Activated naive CD4-positive, alpha-beta T cell treated with anti-CD3 and anti-CD28 coated beads for 36 hours (primary cell): ENCODE measurements at regions of chr7 and their contacts with region 1.

Region 1: GRCh38 chr7:51162724-51163329 is 153.8 kb downstream of the COBL start:
- DNase-seq: peak; percentile 92
- H3K4me3 Mint-ChIP-seq: no peak overlapping the region
- H3K27ac Mint-ChIP-seq: no peak overlapping the region
- H3K4me1 Mint-ChIP-seq: peaks cover 9% of the 10 kb centered on the region
- H3K27me3 Mint-ChIP-seq: peaks cover 12% of the 10 kb centered on the region

Region 2: GRCh38 chr7:50610521-50611277 is 552.1 kb before region 1 on chr7:
- CTCF ChIA-PET with region 1: interaction called, 6 read pairs
- intact Hi-C with region 1: loop called (anchors 2 kb)
- DNase-seq: peak; percentile 80
- H3K4me3 Mint-ChIP-seq: no peak overlapping the region
- H3K27ac Mint-ChIP-seq: no peak overlapping the region
- H3K4me1 Mint-ChIP-seq: peaks cover 26% of the 10 kb centered on the region
- H3K27me3 Mint-ChIP-seq: no peaks in the 10 kb centered on the region

Region 3: GRCh38 chr7:50696810-50697582 is 465.8 kb before region 1 on chr7:
- CTCF ChIA-PET with region 1: interaction called, 3 read pairs
- intact Hi-C with region 1: loop called (anchors 1 kb)
- DNase-seq: peak; percentile 15
- H3K4me3 Mint-ChIP-seq: no peak overlapping the region
- H3K27ac Mint-ChIP-seq: no peak overlapping the region
- H3K4me1 Mint-ChIP-seq: peaks cover 19% of the 10 kb centered on the region
- H3K27me3 Mint-ChIP-seq: no peaks in the 10 kb centered on the region

Region 4: DNA sequence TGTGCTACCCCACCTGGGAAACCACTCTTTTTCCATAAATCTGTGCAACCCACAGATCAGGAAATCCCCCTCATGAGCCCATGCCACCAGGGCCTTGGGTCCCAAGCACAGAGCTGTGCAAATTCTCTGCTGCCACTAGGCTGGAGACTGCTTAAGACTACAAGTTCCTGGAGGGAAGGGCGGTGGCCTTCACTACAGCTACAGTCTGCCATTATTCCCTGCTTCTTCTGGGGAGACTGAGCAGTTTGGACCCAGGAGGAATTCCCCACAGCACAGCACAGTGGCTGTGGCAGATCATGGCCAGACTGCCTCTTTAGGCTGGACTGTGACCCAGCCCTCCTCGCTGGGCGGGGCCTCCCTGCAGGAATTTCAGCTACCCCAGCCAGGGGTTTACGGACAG is 290.4 kb before region 1 on chr7:
- CTCF ChIA-PET with region 1: no interaction called
- intact Hi-C with region 1: no loop called
- DNase-seq: no peak
- H3K4me3 Mint-ChIP-seq: no peak overlapping the region
- H3K27ac Mint-ChIP-seq: no peak overlapping the region
- H3K4me1 Mint-ChIP-seq: no peaks in the 10 kb centered on the region
- H3K27me3 Mint-ChIP-seq: peaks cover 19% of the 10 kb centered on the region

Region 5: GRCh38 chr7:51060536-51060935 is 102.3 kb before region 1 on chr7:
- CTCF ChIA-PET with region 1: interaction called, 6 read pairs
- intact Hi-C with region 1: loop called (anchors 2 kb)
- DNase-seq: no peak
- H3K4me3 Mint-ChIP-seq: no peak overlapping the region
- H3K27ac Mint-ChIP-seq: no peak overlapping the region
- H3K4me1 Mint-ChIP-seq: no peaks in the 10 kb centered on the region
- H3K27me3 Mint-ChIP-seq: no peaks in the 10 kb centered on the region

Region 6: GRCh38 chr7:51175316-51175991 is 12.6 kb after region 1 on chr7:
- CTCF ChIA-PET with region 1: interaction called, 11 read pairs
- intact Hi-C with region 1: no loop called
- DNase-seq: no peak
- H3K4me3 Mint-ChIP-seq: no peak overlapping the region
- H3K27ac Mint-ChIP-seq: no peak overlapping the region
- H3K4me1 Mint-ChIP-seq: no peaks in the 10 kb centered on the region
- H3K27me3 Mint-ChIP-seq: peaks cover 1% of the 10 kb centered on the region

Region 7: DNA sequence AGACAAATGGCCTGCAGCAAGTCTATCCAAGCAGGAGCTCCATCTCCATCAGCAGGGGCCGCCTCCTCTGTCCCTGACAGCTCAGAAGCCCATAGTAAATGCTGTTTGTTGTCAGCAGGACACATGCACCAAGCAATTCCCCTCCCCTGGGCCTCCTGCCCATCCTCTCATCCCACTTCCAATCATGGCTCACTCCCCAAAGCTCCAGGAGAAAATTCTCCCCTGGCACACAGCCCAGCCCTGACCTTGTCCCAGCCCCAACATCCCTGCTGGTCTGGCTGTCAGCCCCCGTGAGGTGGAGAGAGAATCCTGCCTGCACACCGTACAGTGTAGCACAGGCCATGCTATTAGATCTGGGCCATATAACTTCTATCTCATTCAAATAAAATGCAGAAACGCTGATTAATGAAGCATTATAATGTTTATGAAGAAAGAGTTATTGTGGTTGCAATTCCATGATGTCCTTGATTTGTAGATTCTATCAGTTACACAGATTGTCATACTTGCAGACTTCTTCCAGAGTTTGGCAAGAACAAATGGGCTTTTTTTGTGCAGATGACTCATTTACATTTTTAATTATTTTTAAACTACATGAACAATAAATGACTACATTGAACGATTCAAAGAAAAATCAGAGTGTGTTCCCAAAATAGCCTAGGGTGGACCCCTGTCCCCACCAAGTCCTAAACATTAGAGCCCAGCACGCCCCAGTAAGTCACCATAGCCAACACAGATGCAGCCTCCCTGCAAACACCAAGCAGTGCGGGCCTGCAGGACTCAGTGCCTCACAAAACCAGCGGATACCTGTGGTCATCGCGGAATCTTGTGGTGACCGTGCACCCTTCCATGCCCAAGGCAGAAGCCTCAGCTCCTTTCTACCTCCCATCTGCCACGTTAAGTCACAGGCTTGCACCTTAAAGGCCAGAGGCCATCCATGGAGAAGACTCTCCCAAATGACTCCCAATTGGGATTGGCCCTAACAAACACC is 83.7 kb after region 1 on chr7:
- CTCF ChIA-PET with region 1: no interaction called
- intact Hi-C with region 1: no loop called
- DNase-seq: no peak
- H3K4me3 Mint-ChIP-seq: no peak overlapping the region
- H3K27ac Mint-ChIP-seq: no peak overlapping the region
- H3K4me1 Mint-ChIP-seq: no peaks in the 10 kb centered on the region
- H3K27me3 Mint-ChIP-seq: peaks cover 6% of the 10 kb centered on the region

Region 8: GRCh38 chr7:51366930-51367613 is 204.2 kb after region 1 on chr7:
- CTCF ChIA-PET with region 1: interaction called, 31 read pairs
- intact Hi-C with region 1: loop called (anchors 1 kb)
- DNase-seq: peak; percentile 25
- H3K4me3 Mint-ChIP-seq: no peak overlapping the region
- H3K27ac Mint-ChIP-seq: no peak overlapping the region
- H3K4me1 Mint-ChIP-seq: no peaks in the 10 kb centered on the region
- H3K27me3 Mint-ChIP-seq: no peaks in the 10 kb centered on the region

Region 9: GRCh38 chr7:51471981-51472296 is 309.1 kb after region 1 on chr7:
- CTCF ChIA-PET with region 1: no interaction called
- intact Hi-C with region 1: no loop called
- DNase-seq: no peak
- H3K4me3 Mint-ChIP-seq: no peak overlapping the region
- H3K27ac Mint-ChIP-seq: no peak overlapping the region
- H3K4me1 Mint-ChIP-seq: peaks cover 9% of the 10 kb centered on the region
- H3K27me3 Mint-ChIP-seq: peaks cover 13% of the 10 kb centered on the region

Region 10: DNA sequence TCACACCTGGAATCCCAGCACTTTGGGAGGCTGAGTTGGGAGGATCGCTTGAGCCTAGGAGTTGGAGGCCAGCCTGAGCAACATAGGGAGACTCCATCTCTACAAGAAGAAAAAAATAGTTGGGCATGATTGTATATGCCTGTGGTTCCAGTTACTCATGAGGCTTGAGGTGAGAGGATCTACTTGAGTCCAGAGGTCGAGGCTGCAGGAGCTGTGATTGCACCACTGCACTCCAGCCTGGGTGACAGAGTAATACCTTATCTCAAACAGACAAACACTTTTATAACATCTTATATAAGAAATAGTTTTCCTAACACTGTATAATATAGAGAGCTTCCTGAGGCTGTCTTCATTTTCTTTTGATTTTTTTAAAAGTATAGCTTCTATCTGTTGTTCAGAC is 602.1 kb after region 1 on chr7:
- CTCF ChIA-PET with region 1: no interaction called
- intact Hi-C with region 1: no loop called
- DNase-seq: no peak
- H3K4me3 Mint-ChIP-seq: no peak overlapping the region
- H3K27ac Mint-ChIP-seq: no peak overlapping the region
- H3K4me1 Mint-ChIP-seq: no peaks in the 10 kb centered on the region
- H3K27me3 Mint-ChIP-seq: no peaks in the 10 kb centered on the region